ENCODE measurements at regions of chr10 and their contacts with region 1.

Region 1: GRCh38 chr10:76251841-76252671 is 820.6 kb downstream of the LRMDA start:
- DNase-seq: peak; percentile 99
- H3K4me3 ChIP-seq: no peak overlapping the region
- H3K27ac ChIP-seq: peak overlapping the region; percentile 72 to 77 (median 76)
- H3K4me1 ChIP-seq: peaks cover 0 to 31% (median 17%) of the 10 kb centered on the region in 4 donors
- H3K27me3 ChIP-seq: no peaks in the 10 kb centered on the region
- CTCF ChIP-seq: no peak
- EP300 ChIP-seq: peak; percentile 85 to 97 (median 90)
- POLR2A ChIP-seq: no peak

Region 2: GRCh38 chr10:76086761-76087639 is 165.1 kb before region 1 on chr10:
- intact Hi-C with region 1: loop called (anchors 2 kb)
- DNase-seq: peak; percentile 89
- H3K4me3 ChIP-seq: no peak overlapping the region
- H3K27ac ChIP-seq: peak overlapping the region; percentile 60 to 78 (median 74)
- H3K4me1 ChIP-seq: peaks cover 0 to 32% (median 24%) of the 10 kb centered on the region in 4 donors
- H3K27me3 ChIP-seq: no peaks in the 10 kb centered on the region
- CTCF ChIP-seq: peak; percentile 64 to 89 (median 78)
- EP300 ChIP-seq: peak in 3 of 4 donors; percentile 48 to 75 (median 58)
- POLR2A ChIP-seq: no peak

Region 3: DNA sequence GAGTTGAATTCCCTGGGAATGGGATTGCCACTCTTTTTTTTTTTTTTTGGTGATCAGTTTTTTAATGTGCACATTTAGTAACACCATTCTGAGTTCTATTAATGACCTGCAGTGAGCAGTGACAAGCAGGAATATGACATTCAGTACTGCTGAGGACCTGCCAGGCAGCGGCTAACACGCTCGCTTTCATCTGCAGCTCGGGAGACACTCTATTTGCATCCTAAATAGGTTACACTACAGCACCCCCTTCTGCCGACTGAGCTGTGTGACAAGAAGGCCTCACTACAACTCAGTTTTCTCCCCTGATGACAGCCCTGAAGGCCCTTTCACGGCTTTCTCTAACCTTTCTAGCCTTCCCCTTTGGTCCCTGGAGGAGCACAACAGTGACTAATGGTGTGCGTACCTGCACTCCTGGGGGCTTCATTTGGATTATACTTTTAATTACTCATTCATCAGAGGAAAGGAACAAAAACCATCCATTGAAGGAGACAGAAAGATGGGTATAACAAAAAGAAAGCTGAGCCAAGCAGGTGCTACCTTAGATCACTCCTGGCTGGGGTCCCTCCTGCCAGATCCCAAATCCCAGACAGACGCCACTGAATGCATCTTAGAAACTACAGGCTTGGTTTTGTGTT is 51.7 kb after region 1 on chr10:
- intact Hi-C with region 1: no loop called
- DNase-seq: peak; percentile 80
- H3K4me3 ChIP-seq: no peak overlapping the region
- H3K27ac ChIP-seq: peak overlapping the region in 2 of 4 donors; percentile 39 to 44
- H3K4me1 ChIP-seq: peaks cover 0 to 28% (median 17%) of the 10 kb centered on the region in 4 donors
- H3K27me3 ChIP-seq: no peaks in the 10 kb centered on the region
- CTCF ChIP-seq: peak in 3 of 4 experiments; percentile 27 to 41 (median 28)
- EP300 ChIP-seq: no peak
- POLR2A ChIP-seq: no peak

Region 4: DNA sequence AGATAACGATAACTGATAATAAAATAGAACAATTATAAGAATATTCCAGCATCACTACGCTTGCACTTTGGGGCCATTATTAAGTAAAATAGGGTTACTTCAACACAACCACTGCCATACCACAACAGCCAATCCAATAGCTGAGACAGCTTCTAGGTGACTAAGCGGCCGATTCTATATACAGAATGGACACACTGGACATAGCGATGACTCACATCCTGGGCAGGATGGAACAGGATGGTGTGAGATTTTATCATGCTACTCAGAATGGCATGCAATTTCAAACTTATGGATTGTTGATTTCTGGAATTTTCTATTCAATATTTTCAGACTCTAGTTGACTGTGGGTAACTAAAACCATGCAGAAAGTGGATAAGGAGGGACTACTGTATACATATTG is 100.2 kb after region 1 on chr10:
- intact Hi-C with region 1: loop called (anchors 1 kb)
- DNase-seq: no peak
- H3K4me3 ChIP-seq: no peak overlapping the region
- H3K27ac ChIP-seq: peak overlapping the region in 3 of 4 donors; percentile 51 to 69 (median 57)
- H3K4me1 ChIP-seq: peaks cover 0 to 53% (median 26%) of the 10 kb centered on the region in 4 donors
- H3K27me3 ChIP-seq: no peaks in the 10 kb centered on the region
- CTCF ChIP-seq: no peak
- EP300 ChIP-seq: no peak
- POLR2A ChIP-seq: no peak

Region 5: GRCh38 chr10:76523246-76523645 is 271.2 kb after region 1 on chr10:
- intact Hi-C with region 1: loop called (anchors 1 kb)
- DNase-seq: peak; percentile 78
- H3K4me3 ChIP-seq: no peak overlapping the region
- H3K27ac ChIP-seq: peak overlapping the region; percentile 60 to 80 (median 78)
- H3K4me1 ChIP-seq: peaks cover 0 to 30% (median 25%) of the 10 kb centered on the region in 4 donors
- H3K27me3 ChIP-seq: no peaks in the 10 kb centered on the region
- CTCF ChIP-seq: no peak
- EP300 ChIP-seq: no peak
- POLR2A ChIP-seq: no peak

Region 6: DNA sequence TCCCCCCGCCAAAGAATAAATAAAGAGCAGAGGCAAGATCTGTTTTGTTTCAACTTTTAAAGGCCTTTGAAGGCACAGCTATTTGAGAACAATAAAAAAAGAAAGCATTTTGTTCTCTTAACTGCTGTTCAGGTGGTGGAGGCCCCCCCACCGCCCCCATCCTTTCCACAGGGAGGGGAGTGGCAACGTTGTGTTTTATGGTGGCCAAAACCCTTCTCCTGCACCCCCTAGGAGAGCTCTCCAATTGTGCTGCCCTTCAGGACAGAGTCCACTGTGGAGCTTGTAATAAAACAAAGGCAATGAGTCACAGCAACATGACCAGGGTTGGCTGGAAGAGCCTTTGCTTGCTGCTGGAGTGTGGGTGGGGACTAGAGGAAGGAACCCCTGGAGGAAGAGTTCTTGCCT is 397.7 kb after region 1 on chr10:
- intact Hi-C with region 1: loop called (anchors 2 kb)
- DNase-seq: peak; percentile 93
- H3K4me3 ChIP-seq: no peak overlapping the region
- H3K27ac ChIP-seq: peak overlapping the region in 3 of 4 donors; percentile 77 to 81 (median 80)
- H3K4me1 ChIP-seq: peaks cover 0 to 72% (median 42%) of the 10 kb centered on the region in 4 donors
- H3K27me3 ChIP-seq: no peaks in the 10 kb centered on the region
- CTCF ChIP-seq: no peak
- EP300 ChIP-seq: peak; percentile 49 to 90 (median 68)
- POLR2A ChIP-seq: no peak

Region 7: GRCh38 chr10:77004917-77005564 is 753.0 kb after region 1 on chr10:
- intact Hi-C with region 1: loop called (anchors 5 kb)
- DNase-seq: no peak
- H3K4me3 ChIP-seq: no peak overlapping the region
- H3K27ac ChIP-seq: peak overlapping the region in 3 of 4 donors; percentile 50 to 57 (median 53)
- H3K4me1 ChIP-seq: peaks cover 0 to 39% (median 25%) of the 10 kb centered on the region in 4 donors
- H3K27me3 ChIP-seq: no peaks in the 10 kb centered on the region
- CTCF ChIP-seq: peak; percentile 76 to 85 (median 82)
- EP300 ChIP-seq: no peak
- POLR2A ChIP-seq: no peak